OCI-LY7 (cell line): ENCODE measurements at regions of chr15 and their contacts with region 1.

Region 1: GRCh38 chr15:85504749-85505676 is 124.6 kb downstream of the AKAP13 start:
- DNase-seq: peak; percentile 78
- H3K4me3 ChIP-seq: no peak overlapping the region
- H3K27ac ChIP-seq: peak overlapping the region; percentile 27
- H3K4me1 ChIP-seq: peaks cover 31% of the 10 kb centered on the region
- CTCF ChIP-seq: peak; percentile 99

Region 2: GRCh38 chr15:85443593-85444087 is 61.4 kb before region 1 on chr15:
- CTCF ChIA-PET with region 1: no interaction called
- POLR2A ChIA-PET with region 1: no interaction called
- intact Hi-C with region 1: no loop called
- DNase-seq: peak; percentile 52
- H3K4me3 ChIP-seq: peak overlapping the region; percentile 56
- H3K27ac ChIP-seq: peak overlapping the region; percentile 70
- H3K4me1 ChIP-seq: peaks cover 57% of the 10 kb centered on the region
- CTCF ChIP-seq: no peak

Region 3: GRCh38 chr15:85582131-85583079 is 77.4 kb after region 1 on chr15:
- CTCF ChIA-PET with region 1: no interaction called
- POLR2A ChIA-PET with region 1: interaction called, 4 read pairs
- intact Hi-C with region 1: loop called (anchors 5 kb)
- DNase-seq: peak; percentile 78
- H3K4me3 ChIP-seq: peak overlapping the region; percentile 59
- H3K27ac ChIP-seq: peak overlapping the region; percentile 61
- H3K4me1 ChIP-seq: peaks cover 50% of the 10 kb centered on the region
- CTCF ChIP-seq: no peak

Region 4: DNA sequence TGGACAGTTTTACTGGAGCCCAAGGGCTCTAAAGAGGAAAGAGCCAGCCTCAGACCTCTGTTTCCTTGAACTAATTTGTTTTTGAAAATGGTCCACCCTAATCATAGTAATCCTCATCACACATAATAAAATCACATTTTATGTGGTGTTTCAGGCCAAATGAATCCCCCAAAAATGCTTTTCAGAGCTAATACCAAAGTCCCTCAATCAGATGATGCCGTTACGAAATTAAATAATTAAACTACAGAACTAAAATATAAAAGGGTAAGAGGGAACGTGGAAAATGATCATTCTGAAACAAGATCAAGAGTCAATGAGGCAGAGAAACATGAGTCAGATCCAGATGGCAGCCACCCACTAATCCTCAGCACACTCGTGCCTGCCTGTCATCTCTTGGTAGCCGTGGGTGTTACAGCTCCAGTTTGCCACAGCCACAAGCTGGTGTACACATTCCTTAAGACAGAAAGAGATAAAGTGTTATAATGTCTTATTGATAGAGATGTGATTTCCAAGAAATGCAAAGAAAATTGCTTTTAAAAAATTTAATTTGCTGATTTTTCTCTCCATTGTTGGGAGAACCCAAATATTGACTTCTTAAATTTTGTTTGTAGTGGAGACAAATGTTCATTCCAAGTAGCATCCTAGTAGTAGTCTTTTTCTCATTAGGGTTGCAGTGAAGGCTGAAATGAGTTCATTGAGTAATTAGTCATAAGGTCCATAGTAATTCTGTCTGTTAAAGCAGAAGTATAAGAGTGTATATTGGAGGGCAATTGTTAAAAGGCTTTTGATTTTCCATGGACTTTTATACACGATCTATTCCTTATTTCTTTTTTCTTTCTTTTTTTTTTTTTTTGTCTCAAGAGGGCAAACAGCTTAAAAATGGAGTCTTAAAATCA is 678.8 kb after region 1 on chr15:
- CTCF ChIA-PET with region 1: no interaction called
- POLR2A ChIA-PET with region 1: no interaction called
- intact Hi-C with region 1: no loop called
- DNase-seq: no peak
- H3K4me3 ChIP-seq: no peak overlapping the region
- H3K27ac ChIP-seq: no peak overlapping the region
- H3K4me1 ChIP-seq: no peaks in the 10 kb centered on the region
- CTCF ChIP-seq: no peak